ENCODE measurements at regions of chr6 and their contacts with region 1.

Region 1: DNA sequence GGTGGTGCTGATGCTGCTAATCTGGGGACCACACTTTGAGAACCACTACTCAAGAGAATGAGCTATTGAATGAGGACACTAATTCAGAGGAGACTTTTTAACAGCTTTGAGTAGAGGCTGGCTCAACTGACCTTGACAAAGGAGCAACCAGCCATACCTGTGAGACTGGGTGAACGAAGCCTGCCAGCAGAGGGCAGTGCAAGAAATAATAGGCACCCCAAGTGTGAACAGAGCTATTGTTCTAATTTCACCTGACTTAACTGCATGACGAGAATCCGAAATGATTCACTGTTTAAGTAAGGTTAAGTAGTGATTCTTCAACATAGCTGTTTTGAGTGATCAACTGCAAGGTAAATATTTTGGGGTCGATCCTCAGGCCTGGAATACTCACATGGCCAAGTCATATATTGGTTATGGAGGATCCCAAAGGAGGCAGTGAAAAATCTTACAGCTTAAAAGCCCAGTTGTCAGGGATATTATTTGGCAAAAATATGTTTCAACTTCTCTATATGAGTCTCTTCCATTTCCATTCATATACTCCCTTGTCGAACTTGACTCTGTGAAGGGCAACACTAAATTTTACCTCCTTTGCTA is 550.5 kb upstream of the MARCKS start:
- DNase-seq: peak; percentile 62
- ATAC-seq: peak; percentile 98
- H3K4me3 ChIP-seq: no peak overlapping the region; a peak in 1 of 6 replicates
- H3K27ac ChIP-seq: no peak overlapping the region
- H3K4me1 ChIP-seq: peaks cover 9% of the 10 kb centered on the region; the same call in 1 of the 2 replicates
- H3K27me3 ChIP-seq: no peaks in the 10 kb centered on the region
- CTCF ChIP-seq: peak; percentile 87
- EP300 ChIP-seq: no peak
- POLR2A ChIP-seq: no peak
- RAD21 ChIP-seq: peak; percentile 81

Region 2: GRCh38 chr6:112886415-112886814 is 420.2 kb before region 1 on chr6:
- CTCF ChIA-PET with region 1: no interaction called
- POLR2A ChIA-PET with region 1: no interaction called
- in situ Hi-C with region 1: no loop called
- intact Hi-C with region 1: no loop called
- DNase-seq: no peak
- ATAC-seq: no peak
- H3K4me3 ChIP-seq: no peak overlapping the region
- H3K27ac ChIP-seq: no peak overlapping the region
- H3K4me1 ChIP-seq: no peaks in the 10 kb centered on the region
- H3K27me3 ChIP-seq: no peaks in the 10 kb centered on the region; a peak in 1 of 5 replicates
- CTCF ChIP-seq: no peak
- EP300 ChIP-seq: no peak
- POLR2A ChIP-seq: no peak
- RAD21 ChIP-seq: no peak

Region 3: GRCh38 chr6:113352029-113352801 is 45.6 kb after region 1 on chr6:
- CTCF ChIA-PET with region 1: no interaction called
- POLR2A ChIA-PET with region 1: interaction called, 12 read pairs
- in situ Hi-C with region 1: no loop called
- intact Hi-C with region 1: loop called (anchors 2 kb)
- DNase-seq: peak; percentile 100
- ATAC-seq: peak; percentile 94
- H3K4me3 ChIP-seq: peak overlapping the region in 1 of 3 experiments; percentile 20; a peak in 1 of 6 replicates
- H3K27ac ChIP-seq: peak overlapping the region; percentile 91
- H3K4me1 ChIP-seq: peaks cover 75% of the 10 kb centered on the region
- H3K27me3 ChIP-seq: no peaks in the 10 kb centered on the region; a peak in 1 of 5 replicates
- CTCF ChIP-seq: no peak
- EP300 ChIP-seq: peak; percentile 97 to 100
- POLR2A ChIP-seq: no peak
- RAD21 ChIP-seq: no peak

Region 4: DNA sequence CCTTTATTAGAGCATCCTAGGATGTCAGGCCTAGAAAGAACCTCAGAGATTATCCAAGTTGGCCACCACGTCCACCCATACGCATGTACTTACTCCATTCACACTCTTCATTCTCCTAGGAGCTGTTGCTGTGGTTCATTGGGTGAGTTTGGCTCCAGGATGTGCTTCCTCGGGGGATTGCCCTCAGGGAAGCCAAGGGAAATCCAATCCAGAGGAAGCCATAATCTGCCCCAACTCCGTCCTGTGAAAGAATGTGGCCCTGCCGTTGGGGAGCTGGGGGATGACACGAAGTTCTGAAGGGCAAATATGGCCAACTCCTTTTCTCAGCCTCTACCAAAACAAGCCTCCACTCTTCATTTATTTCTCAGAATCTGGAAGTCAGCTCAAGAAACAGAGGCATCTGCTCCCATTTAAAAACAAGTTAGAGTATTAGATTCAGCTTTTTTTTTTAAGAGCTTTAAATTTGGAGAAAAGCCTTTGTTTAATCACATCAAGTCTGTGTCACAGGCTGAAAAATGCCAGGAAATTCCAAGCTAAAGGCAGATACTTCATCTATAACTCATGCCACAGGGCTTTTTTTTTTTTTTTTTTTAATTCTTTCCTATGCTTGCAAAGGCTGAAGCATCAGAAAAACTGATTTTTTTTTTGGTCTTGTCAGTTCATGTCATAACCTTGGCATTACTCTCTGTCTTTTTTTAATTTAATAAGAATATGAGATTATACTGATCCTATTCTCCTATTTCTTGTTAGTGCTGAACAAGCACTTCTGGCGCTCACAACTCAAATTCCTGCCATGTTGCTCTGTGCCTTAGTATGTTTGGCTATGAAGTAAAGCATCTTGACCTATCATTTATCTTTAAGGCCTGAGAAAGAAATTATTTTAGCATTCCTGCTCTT is 69.5 kb after region 1 on chr6:
- CTCF ChIA-PET with region 1: no interaction called
- POLR2A ChIA-PET with region 1: no interaction called
- in situ Hi-C with region 1: no loop called
- intact Hi-C with region 1: no loop called
- DNase-seq: no peak
- ATAC-seq: no peak
- H3K4me3 ChIP-seq: no peak overlapping the region
- H3K27ac ChIP-seq: no peak overlapping the region
- H3K4me1 ChIP-seq: no peaks in the 10 kb centered on the region
- H3K27me3 ChIP-seq: no peaks in the 10 kb centered on the region
- CTCF ChIP-seq: no peak
- EP300 ChIP-seq: no peak
- POLR2A ChIP-seq: no peak
- RAD21 ChIP-seq: no peak

Region 5: GRCh38 chr6:113394216-113394615 is 87.6 kb after region 1 on chr6:
- CTCF ChIA-PET with region 1: no interaction called
- POLR2A ChIA-PET with region 1: no interaction called
- in situ Hi-C with region 1: no loop called
- intact Hi-C with region 1: loop called (anchors 5 kb)
- DNase-seq: no peak
- ATAC-seq: no peak
- H3K4me3 ChIP-seq: no peak overlapping the region
- H3K27ac ChIP-seq: no peak overlapping the region
- H3K4me1 ChIP-seq: no peaks in the 10 kb centered on the region
- H3K27me3 ChIP-seq: no peaks in the 10 kb centered on the region; a peak in 1 of 5 replicates
- CTCF ChIP-seq: no peak
- EP300 ChIP-seq: no peak
- POLR2A ChIP-seq: no peak
- RAD21 ChIP-seq: no peak

Region 6: DNA sequence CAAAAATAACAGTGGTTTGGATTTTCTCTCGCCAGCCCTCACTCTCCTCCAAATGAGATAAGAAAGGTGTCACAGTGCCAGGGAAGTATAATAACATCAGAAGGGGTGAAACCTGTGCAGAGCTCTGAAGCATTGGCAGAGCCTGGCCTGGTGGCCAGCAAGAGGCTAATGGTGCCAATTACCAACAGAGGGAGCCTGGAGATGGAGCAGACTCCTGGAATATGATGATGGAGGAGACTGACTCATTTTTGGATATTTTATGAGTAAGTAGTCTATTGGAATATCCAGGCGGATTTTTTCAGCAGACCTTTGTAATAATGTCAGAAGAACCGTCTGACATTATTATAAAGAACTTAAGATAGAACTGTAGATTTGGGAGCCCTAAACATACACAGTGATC is 107.9 kb after region 1 on chr6:
- CTCF ChIA-PET with region 1: no interaction called
- POLR2A ChIA-PET with region 1: no interaction called
- in situ Hi-C with region 1: no loop called
- intact Hi-C with region 1: loop called (anchors 1 kb)
- DNase-seq: peak; percentile 40
- ATAC-seq: peak; percentile 92
- H3K4me3 ChIP-seq: no peak overlapping the region
- H3K27ac ChIP-seq: no peak overlapping the region
- H3K4me1 ChIP-seq: no peaks in the 10 kb centered on the region
- H3K27me3 ChIP-seq: no peaks in the 10 kb centered on the region
- CTCF ChIP-seq: peak; percentile 58
- EP300 ChIP-seq: no peak
- POLR2A ChIP-seq: no peak
- RAD21 ChIP-seq: peak; percentile 48

Region 7: GRCh38 chr6:113461153-113461932 is 154.7 kb after region 1 on chr6:
- CTCF ChIA-PET with region 1: no interaction called
- POLR2A ChIA-PET with region 1: no interaction called
- in situ Hi-C with region 1: no loop called
- intact Hi-C with region 1: loop called (anchors 2 kb)
- DNase-seq: peak; percentile 9
- ATAC-seq: peak; percentile 62
- H3K4me3 ChIP-seq: no peak overlapping the region
- H3K27ac ChIP-seq: no peak overlapping the region
- H3K4me1 ChIP-seq: peaks cover 14% of the 10 kb centered on the region
- H3K27me3 ChIP-seq: no peaks in the 10 kb centered on the region
- CTCF ChIP-seq: 0 out of 2 replicates have a peak, but pooled peaks have one; percentile 5
- EP300 ChIP-seq: no peak
- POLR2A ChIP-seq: no peak
- RAD21 ChIP-seq: no peak

Region 8: GRCh38 chr6:113642714-113643406 is 336.2 kb after region 1 on chr6:
- CTCF ChIA-PET with region 1: no interaction called
- POLR2A ChIA-PET with region 1: interaction called, 3 read pairs
- in situ Hi-C with region 1: no loop called
- intact Hi-C with region 1: loop called (anchors 5 kb)
- DNase-seq: peak; percentile 100
- ATAC-seq: peak; percentile 94
- H3K4me3 ChIP-seq: peak overlapping the region in 1 of 3 experiments; percentile 44; a peak in 1 of 6 replicates
- H3K27ac ChIP-seq: peak overlapping the region; percentile 99
- H3K4me1 ChIP-seq: peaks cover 75% of the 10 kb centered on the region
- H3K27me3 ChIP-seq: no peaks in the 10 kb centered on the region
- CTCF ChIP-seq: no peak
- EP300 ChIP-seq: peak; percentile 48 to 94; a peak in 3 of 4 replicates
- POLR2A ChIP-seq: peak; percentile 49 to 53; a peak in 3 of 4 replicates
- RAD21 ChIP-seq: no peak

Region 9: DNA sequence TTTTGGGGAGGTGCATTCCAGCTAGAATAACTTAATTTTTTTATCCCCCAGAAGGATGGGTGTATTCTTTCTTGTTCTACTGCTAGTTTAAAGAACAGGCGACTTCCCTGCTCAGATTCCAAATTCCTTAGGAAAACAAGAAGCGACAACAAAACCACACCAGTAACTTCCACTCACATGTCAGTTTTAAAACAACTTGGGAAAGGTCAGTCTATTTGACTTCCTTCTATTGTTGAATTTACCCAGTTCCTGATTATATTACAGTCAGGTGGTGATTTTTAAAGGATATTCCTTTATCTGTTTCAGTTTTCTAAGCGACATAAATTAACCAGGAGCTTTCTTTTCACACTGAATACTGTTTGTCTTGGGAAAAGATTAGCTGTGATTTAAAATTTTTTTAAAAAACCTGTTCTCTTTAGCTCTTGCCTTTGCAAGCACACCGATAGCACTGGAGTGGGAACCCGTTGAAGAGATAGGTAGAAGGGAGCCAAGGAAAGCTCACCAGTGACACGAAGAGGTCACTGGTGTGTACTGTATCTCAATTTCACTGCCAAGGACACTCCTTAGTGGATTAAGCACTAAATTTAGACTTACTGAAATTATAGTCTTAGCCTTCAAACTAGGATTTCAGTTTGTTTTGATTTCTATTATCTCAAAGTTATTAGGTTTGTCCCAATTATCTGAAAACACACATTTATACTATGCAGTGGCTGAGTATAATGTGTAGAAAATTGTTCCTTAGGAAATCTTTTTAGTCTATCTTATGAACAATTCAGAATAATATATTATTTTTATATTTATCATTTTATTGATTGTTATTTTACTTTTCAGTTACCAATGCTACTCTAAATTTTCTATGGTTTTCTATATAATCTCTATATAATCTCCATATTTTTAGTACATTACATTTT is 572.8 kb after region 1 on chr6:
- CTCF ChIA-PET with region 1: interaction called, 14 read pairs
- POLR2A ChIA-PET with region 1: no interaction called
- in situ Hi-C with region 1: no loop called
- intact Hi-C with region 1: loop called (anchors 1 kb)
- DNase-seq: peak; percentile 67
- ATAC-seq: peak; percentile 100
- H3K4me3 ChIP-seq: no peak overlapping the region
- H3K27ac ChIP-seq: no peak overlapping the region
- H3K4me1 ChIP-seq: peaks cover 13% of the 10 kb centered on the region
- H3K27me3 ChIP-seq: no peaks in the 10 kb centered on the region; a peak in 1 of 5 replicates
- CTCF ChIP-seq: peak; percentile 87
- EP300 ChIP-seq: no peak
- POLR2A ChIP-seq: no peak
- RAD21 ChIP-seq: peak; percentile 77